Activated T-helper 2 cell treated with anti-CD3 and anti-CD28 coated beads, Interferon-gamma antibody, Interleukin-2, Interleukin-4, amounts not matched to agents 10 μg/mL and 5 μg/mL and 100 μg/mL, durations not matched to agents 14 hours and 24 hours and 36 hours (primary cell): ENCODE measurements at regions of chr18 and their contacts with region 1.

Region 1: DNA sequence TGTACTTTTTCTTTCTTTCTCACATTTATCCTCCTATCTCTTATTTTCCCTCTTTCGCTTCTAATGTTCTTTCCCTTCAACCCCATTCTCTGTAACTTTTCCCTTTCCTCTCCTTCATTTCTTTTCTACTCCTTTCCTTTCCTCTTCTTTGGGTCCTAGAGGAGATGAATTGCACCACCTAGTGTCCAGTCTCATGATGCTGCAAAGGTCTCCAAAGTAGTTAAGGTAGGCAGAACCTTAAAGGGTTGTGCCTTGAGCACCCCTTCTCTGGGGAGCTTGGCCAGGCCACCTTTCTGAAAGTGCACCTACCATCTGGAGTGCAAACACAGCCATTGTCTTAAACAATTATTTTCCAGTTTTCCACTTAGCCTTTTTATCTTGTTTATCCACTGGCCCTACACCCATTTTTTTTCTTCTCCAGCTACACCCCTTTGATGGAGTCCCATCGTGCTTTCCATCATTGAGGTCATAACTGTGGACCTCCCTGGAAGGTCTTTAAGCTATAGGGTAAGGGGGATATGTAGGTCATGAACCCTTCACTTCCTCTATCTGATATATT is 156.0 kb downstream of the ESCO1 start:
- DNase-seq: no peak
- H3K4me3 Mint-ChIP-seq: no peak overlapping the region
- H3K27ac Mint-ChIP-seq: no peak overlapping the region
- H3K4me1 Mint-ChIP-seq: peaks cover 2% of the 10 kb centered on the region
- H3K27me3 Mint-ChIP-seq: peaks cover 4% of the 10 kb centered on the region

Region 2: DNA sequence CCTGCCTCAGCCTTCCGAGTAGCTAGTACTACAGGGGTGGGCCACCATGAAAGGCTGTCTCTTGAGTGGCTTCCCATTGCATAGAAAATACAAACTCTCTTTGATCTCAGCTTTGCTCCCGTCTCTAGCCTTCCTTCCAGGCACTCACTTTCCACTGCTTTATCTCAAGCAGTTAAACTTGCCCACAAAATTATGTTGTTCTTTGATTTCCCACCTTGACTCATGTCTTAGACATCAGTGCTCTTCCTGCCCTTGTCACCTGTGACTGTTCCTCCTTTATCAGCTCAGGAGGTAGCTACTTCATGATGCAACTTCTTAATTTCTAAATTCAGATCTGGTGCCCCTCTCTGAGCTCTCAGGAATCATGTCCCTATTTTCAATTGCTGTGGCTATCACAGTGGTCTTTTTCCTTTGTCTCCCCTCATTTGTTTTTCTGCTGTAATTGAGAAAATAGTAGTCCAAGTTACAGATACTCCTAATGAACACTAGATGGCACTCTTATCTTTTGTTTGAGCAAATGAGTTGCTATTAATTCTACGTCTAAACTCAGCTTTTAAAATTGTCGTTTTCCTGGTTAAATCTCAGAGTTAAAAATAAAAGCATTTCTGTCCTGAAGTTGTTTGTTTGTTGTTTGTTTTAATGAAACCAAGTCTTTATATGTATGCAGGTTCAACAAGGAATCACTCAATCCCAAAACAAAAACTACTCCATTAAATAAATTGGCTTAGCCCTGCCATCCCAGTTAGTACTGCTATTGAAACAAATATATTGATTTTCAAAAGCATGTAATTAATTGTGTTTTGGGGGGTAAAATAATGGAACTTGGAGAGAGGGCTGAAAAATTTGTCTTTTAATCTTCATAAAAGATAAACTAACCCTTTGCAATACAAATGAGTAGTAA is 249.4 kb before region 1 on chr18:
- intact Hi-C with region 1: loop called (anchors 1 kb)
- DNase-seq: no peak
- H3K4me3 Mint-ChIP-seq: no peak overlapping the region
- H3K27ac Mint-ChIP-seq: no peak overlapping the region
- H3K4me1 Mint-ChIP-seq: no peaks in the 10 kb centered on the region
- H3K27me3 Mint-ChIP-seq: peaks cover 10% of the 10 kb centered on the region

Region 3: DNA sequence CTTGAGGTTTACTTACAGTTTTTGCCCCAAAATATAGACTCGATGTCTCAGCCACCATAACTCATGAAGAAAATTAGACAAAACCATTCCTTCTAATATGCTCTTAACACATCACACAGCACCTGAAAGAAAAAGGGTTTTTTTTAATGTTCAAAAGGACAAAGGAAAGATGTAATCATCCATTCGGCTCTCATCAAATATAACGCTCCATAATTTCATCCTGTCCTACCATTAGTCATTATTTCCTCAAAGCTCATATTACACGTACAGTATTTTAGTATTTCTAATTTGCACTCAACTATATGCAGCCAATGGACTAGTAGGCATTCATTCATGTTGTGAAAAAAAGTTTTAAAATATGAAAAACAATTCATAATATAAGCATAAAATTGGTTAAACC is 131.1 kb after region 1 on chr18:
- intact Hi-C with region 1: no loop called
- DNase-seq: no peak
- H3K4me3 Mint-ChIP-seq: no peak overlapping the region
- H3K27ac Mint-ChIP-seq: no peak overlapping the region
- H3K4me1 Mint-ChIP-seq: no peaks in the 10 kb centered on the region
- H3K27me3 Mint-ChIP-seq: no peaks in the 10 kb centered on the region